CD4-positive, alpha-beta memory T cell (primary cell): ENCODE measurements at regions of chr14 and their contacts with region 1.

Region 1: GRCh38 chr14:91418387-91419043 is 895 bp upstream of the CCDC88C start:
- DNase-seq: peak; percentile 82 to 86 (median 84)
- H3K4me3 ChIP-seq: peak overlapping the region; percentile 46 to 52
- H3K4me3 Mint-ChIP-seq: peak overlapping the region; percentile 76 to 95 (median 84)
- H3K27ac ChIP-seq: peak overlapping the region; percentile 67
- H3K27ac Mint-ChIP-seq: peak overlapping the region; percentile 90 to 100 (median 95)
- H3K4me1 ChIP-seq: peaks cover 32% of the 10 kb centered on the region
- H3K4me1 Mint-ChIP-seq: peaks cover 23 to 56% (median 33%) of the 10 kb centered on the region in 4 donors
- H3K27me3 ChIP-seq: no peaks in the 10 kb centered on the region
- H3K27me3 Mint-ChIP-seq: peaks cover 0 to 1% of the 10 kb centered on the region in 2 donors

Region 2: GRCh38 chr14:90399541-90400444 is 1018.7 kb before region 1 on chr14:
- CTCF ChIA-PET with region 1: no interaction called
- POLR2A ChIA-PET with region 1: no interaction called
- intact Hi-C with region 1: loop called (anchors 5 kb)
- DNase-seq: peak; percentile 83 to 91 (median 87)
- H3K4me3 ChIP-seq: peak overlapping the region; percentile 71 to 88
- H3K4me3 Mint-ChIP-seq: peak overlapping the region; percentile 95 to 99 (median 98)
- H3K27ac ChIP-seq: peak overlapping the region; percentile 87
- H3K27ac Mint-ChIP-seq: peak overlapping the region; percentile 98 to 99 (median 99)
- H3K4me1 ChIP-seq: peaks cover 59% of the 10 kb centered on the region
- H3K4me1 Mint-ChIP-seq: peaks cover 34 to 70% (median 53%) of the 10 kb centered on the region in 4 donors
- H3K27me3 ChIP-seq: no peaks in the 10 kb centered on the region
- H3K27me3 Mint-ChIP-seq: peaks cover 0 to 5% of the 10 kb centered on the region in 2 donors

Region 3: DNA sequence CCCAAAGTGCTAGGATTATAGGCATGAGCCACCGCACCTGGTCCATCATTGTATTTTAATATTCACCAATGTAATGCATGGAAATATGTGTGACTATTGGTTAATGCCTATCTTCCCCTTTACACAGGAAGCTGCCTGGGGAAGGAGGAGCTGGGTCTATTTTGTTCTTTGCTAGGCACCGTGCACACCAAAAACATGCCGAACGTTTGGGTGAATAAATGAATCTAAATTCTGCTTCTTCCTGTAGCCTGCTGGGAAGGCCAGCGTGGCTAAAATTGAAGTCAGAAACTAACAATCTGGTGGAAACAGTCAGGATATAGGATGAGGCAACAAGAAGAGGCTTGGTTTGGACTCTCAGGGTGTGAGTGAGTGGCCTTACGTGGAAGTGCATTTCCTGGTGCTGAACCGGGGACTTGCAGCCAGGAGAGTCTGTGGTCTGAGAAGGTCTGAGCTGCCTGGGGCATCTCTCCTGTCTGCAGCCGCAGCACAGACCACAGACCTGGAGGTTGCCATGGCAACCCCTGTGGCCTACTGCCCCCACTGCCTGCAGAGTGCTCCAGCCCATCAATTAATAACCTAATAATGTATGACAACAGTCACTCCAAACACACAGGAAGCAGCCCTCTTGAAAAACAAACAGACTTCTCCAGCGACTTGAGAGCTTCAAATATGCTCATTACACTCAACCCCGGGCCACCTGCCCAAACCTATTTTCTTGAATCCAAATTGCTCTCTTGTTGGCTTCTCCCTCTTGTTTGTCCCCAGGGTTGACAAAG is 168.5 kb before region 1 on chr14:
- CTCF ChIA-PET with region 1: no interaction called
- POLR2A ChIA-PET with region 1: interaction called, 68 read pairs
- intact Hi-C with region 1: loop called (anchors 5 kb)
- DNase-seq: peak; percentile 41 to 72 (median 53)
- H3K4me3 ChIP-seq: peak overlapping the region in 1 of 2 donors; percentile 25
- H3K4me3 Mint-ChIP-seq: peak overlapping the region; percentile 61 to 75 (median 68)
- H3K27ac ChIP-seq: peak overlapping the region; percentile 75
- H3K27ac Mint-ChIP-seq: peak overlapping the region; percentile 92 to 99 (median 97)
- H3K4me1 ChIP-seq: peaks cover 95% of the 10 kb centered on the region
- H3K4me1 Mint-ChIP-seq: peaks cover 64 to 90% (median 80%) of the 10 kb centered on the region in 4 donors
- H3K27me3 ChIP-seq: no peaks in the 10 kb centered on the region
- H3K27me3 Mint-ChIP-seq: no peaks in the 10 kb centered on the region

Region 4: GRCh38 chr14:91323671-91324605 is 94.6 kb before region 1 on chr14:
- CTCF ChIA-PET with region 1: interaction called, 522 read pairs
- POLR2A ChIA-PET with region 1: interaction called, 491 read pairs
- intact Hi-C with region 1: loop called (anchors 1 kb)
- DNase-seq: peak; percentile 88 to 96 (median 91)
- H3K4me3 ChIP-seq: peak overlapping the region in 1 of 2 donors; percentile 32
- H3K4me3 Mint-ChIP-seq: peak overlapping the region; percentile 82 to 92 (median 84)
- H3K27ac ChIP-seq: peak overlapping the region; percentile 90
- H3K27ac Mint-ChIP-seq: peak overlapping the region; percentile 97 to 99 (median 99)
- H3K4me1 ChIP-seq: peaks cover 83% of the 10 kb centered on the region
- H3K4me1 Mint-ChIP-seq: peaks cover 35 to 85% (median 69%) of the 10 kb centered on the region in 4 donors
- H3K27me3 ChIP-seq: no peaks in the 10 kb centered on the region
- H3K27me3 Mint-ChIP-seq: no peaks in the 10 kb centered on the region

Region 5: DNA sequence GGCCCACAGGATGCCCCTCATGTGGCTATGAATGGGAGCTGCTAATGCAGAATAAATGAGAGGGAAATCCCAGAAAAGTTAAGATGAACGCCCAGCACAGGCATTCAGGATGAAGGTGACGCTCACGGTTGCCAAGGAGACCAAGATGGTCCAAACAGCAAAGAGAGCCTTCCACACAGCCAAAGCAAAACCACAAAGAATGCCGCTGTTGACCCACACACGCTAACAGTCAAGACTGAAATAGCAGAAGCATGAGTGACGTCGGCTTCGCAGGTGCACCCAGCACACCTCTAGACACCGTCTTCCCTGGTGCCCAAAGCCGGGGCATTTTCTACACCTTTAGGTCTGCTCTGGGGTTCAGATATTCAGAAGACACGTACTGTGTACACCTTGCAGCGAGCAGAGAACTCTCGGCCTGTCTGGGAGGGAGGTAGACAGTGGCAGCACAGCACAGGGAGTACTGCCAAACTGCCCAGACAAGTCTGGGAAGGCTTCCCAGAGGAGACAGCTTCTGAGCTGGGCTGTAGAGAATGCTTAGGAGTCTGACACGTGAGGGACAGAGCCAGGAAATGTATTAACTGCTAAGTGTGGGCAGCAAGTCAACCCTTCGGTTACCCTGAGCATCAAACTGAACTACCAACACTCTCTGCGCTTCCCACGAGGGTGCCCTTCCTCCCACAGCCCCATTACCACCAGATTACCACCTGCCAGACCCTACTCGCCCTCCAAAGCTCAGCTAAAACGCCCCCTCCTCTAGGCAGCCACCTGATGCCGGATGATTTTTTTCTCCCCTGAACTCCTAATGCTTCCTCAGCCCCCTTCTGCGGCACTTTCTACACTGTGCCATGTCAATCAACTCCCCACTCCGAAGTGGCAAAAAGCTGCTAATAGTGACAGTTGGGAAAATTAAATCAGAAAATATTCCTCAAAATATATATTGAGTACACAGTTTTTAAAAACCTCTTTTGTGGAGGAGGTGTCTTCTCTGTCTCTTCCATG is 51.0 kb before region 1 on chr14:
- CTCF ChIA-PET with region 1: interaction called, 39 read pairs
- POLR2A ChIA-PET with region 1: interaction called, 268 read pairs
- intact Hi-C with region 1: no loop called
- DNase-seq: peak; percentile 68 to 97 (median 75)
- H3K4me3 ChIP-seq: peak overlapping the region; percentile 8 to 50
- H3K4me3 Mint-ChIP-seq: peak overlapping the region; percentile 58 to 89 (median 82)
- H3K27ac ChIP-seq: peak overlapping the region; percentile 85
- H3K27ac Mint-ChIP-seq: peak overlapping the region; percentile 94 to 99 (median 97)
- H3K4me1 ChIP-seq: peaks cover 98% of the 10 kb centered on the region
- H3K4me1 Mint-ChIP-seq: peaks cover 63 to 93% (median 76%) of the 10 kb centered on the region in 4 donors
- H3K27me3 ChIP-seq: no peaks in the 10 kb centered on the region
- H3K27me3 Mint-ChIP-seq: no peaks in the 10 kb centered on the region

Region 6: GRCh38 chr14:91396959-91397815 is 21.3 kb before region 1 on chr14:
- CTCF ChIA-PET with region 1: interaction called, 88 read pairs
- POLR2A ChIA-PET with region 1: interaction called, 520 read pairs
- intact Hi-C with region 1: loop called (anchors 1 kb)
- DNase-seq: peak; percentile 64 to 85 (median 72)
- H3K4me3 ChIP-seq: peak overlapping the region; percentile 49 to 61
- H3K4me3 Mint-ChIP-seq: peak overlapping the region; percentile 79 to 99 (median 82)
- H3K27ac ChIP-seq: peak overlapping the region; percentile 65
- H3K27ac Mint-ChIP-seq: peak overlapping the region; percentile 90 to 98 (median 95)
- H3K4me1 ChIP-seq: peaks cover 97% of the 10 kb centered on the region
- H3K4me1 Mint-ChIP-seq: peaks cover 70 to 98% (median 84%) of the 10 kb centered on the region in 4 donors
- H3K27me3 ChIP-seq: no peaks in the 10 kb centered on the region
- H3K27me3 Mint-ChIP-seq: no peaks in the 10 kb centered on the region

Region 7: GRCh38 chr14:91438845-91439244 is 20.3 kb after region 1 on chr14:
- CTCF ChIA-PET with region 1: no interaction called
- POLR2A ChIA-PET with region 1: no interaction called
- intact Hi-C with region 1: no loop called
- DNase-seq: no peak
- H3K4me3 ChIP-seq: no peak overlapping the region
- H3K4me3 Mint-ChIP-seq: no peak overlapping the region
- H3K27ac ChIP-seq: no peak overlapping the region
- H3K27ac Mint-ChIP-seq: no peak overlapping the region
- H3K4me1 ChIP-seq: no peaks in the 10 kb centered on the region
- H3K4me1 Mint-ChIP-seq: no peaks in the 10 kb centered on the region
- H3K27me3 ChIP-seq: no peaks in the 10 kb centered on the region
- H3K27me3 Mint-ChIP-seq: peaks cover 3 to 7% of the 10 kb centered on the region in 2 donors

Region 8: GRCh38 chr14:91510174-91511042 is 91.9 kb after region 1 on chr14 and contains the start of gene PPP4R3A:
- CTCF ChIA-PET with region 1: no interaction called
- POLR2A ChIA-PET with region 1: interaction called, 15 read pairs
- intact Hi-C with region 1: no loop called
- DNase-seq: peak; percentile 93 to 95 (median 95)
- H3K4me3 ChIP-seq: peak within 1 kb of the TSS; percentile 59 to 88
- H3K4me3 Mint-ChIP-seq: peak within 1 kb of the TSS; percentile 97 to 100 (median 100)
- H3K27ac ChIP-seq: peak within 1 kb of the TSS; percentile 99
- H3K27ac Mint-ChIP-seq: peak within 1 kb of the TSS; percentile 99 to 100 (median 100)
- H3K4me1 ChIP-seq: peaks cover 37% of the 10 kb centered on the region
- H3K4me1 Mint-ChIP-seq: peaks cover 21 to 44% (median 29%) of the 10 kb centered on the region in 4 donors
- H3K27me3 ChIP-seq: no peaks in the 10 kb centered on the region
- H3K27me3 Mint-ChIP-seq: no peaks in the 10 kb centered on the region
- total RNA-seq, gene PPP4R3A: 162 to 169 TPM

Region 9: GRCh38 chr14:91624757-91625156 is 206.2 kb after region 1 on chr14:
- CTCF ChIA-PET with region 1: no interaction called
- POLR2A ChIA-PET with region 1: no interaction called
- intact Hi-C with region 1: no loop called
- DNase-seq: no peak
- H3K4me3 ChIP-seq: no peak overlapping the region
- H3K4me3 Mint-ChIP-seq: no peak overlapping the region
- H3K27ac ChIP-seq: no peak overlapping the region
- H3K27ac Mint-ChIP-seq: no peak overlapping the region
- H3K4me1 ChIP-seq: no peaks in the 10 kb centered on the region
- H3K4me1 Mint-ChIP-seq: no peaks in the 10 kb centered on the region
- H3K27me3 ChIP-seq: no peaks in the 10 kb centered on the region
- H3K27me3 Mint-ChIP-seq: peaks cover 2 to 3% of the 10 kb centered on the region in 2 donors